Caco-2 (cell line): ENCODE measurements at regions of chr22 and their contacts with region 1.

Region 1: DNA sequence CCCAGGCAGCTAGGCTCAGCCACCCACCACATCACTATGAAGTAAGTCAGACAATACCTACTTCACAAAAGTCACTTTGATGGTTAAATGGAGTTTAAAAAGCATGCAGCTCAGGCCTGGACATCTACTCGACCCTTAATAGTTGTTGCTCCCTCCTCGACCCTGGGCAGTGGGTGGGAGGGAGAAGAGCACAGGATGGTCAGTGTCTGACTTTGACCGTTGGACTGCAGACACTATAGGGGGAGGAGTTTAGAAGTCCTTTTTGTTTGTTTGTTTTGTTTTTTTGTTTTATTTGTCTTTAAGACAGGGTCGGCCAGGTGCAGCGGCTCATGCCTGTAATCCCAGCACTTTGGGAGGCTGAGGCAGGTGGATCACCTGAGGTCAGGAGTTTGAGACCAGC is 38.6 kb upstream of the XBP1 start:
- DNase-seq: no peak
- H3K4me3 ChIP-seq: no peak overlapping the region
- H3K4me3 Mint-ChIP-seq: no peak overlapping the region
- H3K27ac Mint-ChIP-seq: no peak overlapping the region
- H3K4me1 ChIP-seq: no peaks in the 10 kb centered on the region
- H3K4me1 Mint-ChIP-seq: peaks cover 7% of the 10 kb centered on the region
- H3K27me3 ChIP-seq: no peaks in the 10 kb centered on the region
- H3K27me3 Mint-ChIP-seq: no peaks in the 10 kb centered on the region
- CTCF ChIP-seq: no peak

Region 2: DNA sequence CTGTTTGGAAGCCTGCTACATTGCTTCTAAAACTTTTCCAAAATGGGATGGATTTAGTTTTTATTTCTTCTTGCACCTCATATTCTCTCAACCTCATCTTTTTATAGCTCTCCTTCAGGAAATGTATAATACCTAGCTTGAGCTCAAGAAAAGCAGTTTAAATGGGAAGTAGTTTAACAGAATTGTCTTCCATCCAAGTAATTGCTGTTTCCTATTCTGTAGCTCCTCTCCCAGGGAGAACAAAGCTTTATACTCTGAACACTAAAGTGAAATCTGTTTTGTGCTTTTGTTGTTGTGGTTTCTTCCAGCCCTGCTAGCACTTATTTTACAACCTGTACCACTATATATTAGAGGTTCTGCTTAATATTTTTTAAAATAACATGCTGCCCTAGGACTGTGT is 1158.1 kb after region 1 on chr22:
- CTCF ChIA-PET with region 1: interaction called, 14 read pairs
- POLR2A ChIA-PET with region 1: no interaction called
- intact Hi-C with region 1: no loop called
- DNase-seq: no peak
- H3K4me3 ChIP-seq: no peak overlapping the region
- H3K4me3 Mint-ChIP-seq: no peak overlapping the region
- H3K27ac Mint-ChIP-seq: no peak overlapping the region
- H3K4me1 ChIP-seq: peaks cover 31% of the 10 kb centered on the region
- H3K4me1 Mint-ChIP-seq: peaks cover 28% of the 10 kb centered on the region
- H3K27me3 ChIP-seq: no peaks in the 10 kb centered on the region
- H3K27me3 Mint-ChIP-seq: no peaks in the 10 kb centered on the region
- CTCF ChIP-seq: no peak